Mammary epithelial cell (primary cell): ENCODE measurements at regions of chr2 and their contacts with region 1.

Region 1: GRCh38 chr2:233486778-233487552 is 79.6 kb downstream of the USP40 start:
- DNase-seq: peak; percentile 90
- H3K4me3 ChIP-seq: no peak overlapping the region
- H3K27ac ChIP-seq: peak overlapping the region; percentile 89
- H3K4me1 ChIP-seq: peaks cover 54% of the 10 kb centered on the region
- H3K27me3 ChIP-seq: no peaks in the 10 kb centered on the region
- CTCF ChIP-seq: no peak

Region 2: GRCh38 chr2:233535276-233535675 is 48.3 kb after region 1 on chr2:
- CTCF ChIA-PET with region 1: no interaction called
- dilution Hi-C with region 1: loop called (anchors 5 kb)
- in situ Hi-C with region 1: no loop called
- intact Hi-C with region 1: no loop called
- DNase-seq: no peak
- H3K4me3 ChIP-seq: no peak overlapping the region
- H3K27ac ChIP-seq: no peak overlapping the region
- H3K4me1 ChIP-seq: no peaks in the 10 kb centered on the region
- H3K27me3 ChIP-seq: no peaks in the 10 kb centered on the region
- CTCF ChIP-seq: no peak

Region 3: GRCh38 chr2:234032279-234032856 is 545.4 kb after region 1 on chr2:
- CTCF ChIA-PET with region 1: no interaction called
- dilution Hi-C with region 1: no loop called
- in situ Hi-C with region 1: no loop called
- intact Hi-C with region 1: no loop called
- DNase-seq: peak; percentile 87
- H3K4me3 ChIP-seq: no peak overlapping the region
- H3K27ac ChIP-seq: peak overlapping the region; percentile 5
- H3K4me1 ChIP-seq: peaks cover 16% of the 10 kb centered on the region
- H3K27me3 ChIP-seq: no peaks in the 10 kb centered on the region
- CTCF ChIP-seq: no peak